PC-3 (cell line): ENCODE measurements at regions of chr10 and their contacts with region 1.

Region 1: GRCh38 chr10:38010119-38010903 is at the start of gene ZNF33A:
- DNase-seq: peak; percentile 98
- ATAC-seq: peak; percentile 93
- H3K4me3 ChIP-seq: peak within 1 kb of the TSS; percentile 71
- H3K27ac ChIP-seq: peak within 1 kb of the TSS; percentile 89
- H3K4me1 ChIP-seq: peaks cover 18% of the 10 kb centered on the region
- H3K27me3 ChIP-seq: no peaks in the 10 kb centered on the region
- CTCF ChIP-seq: no peak; the same call in 1 of the 2 replicates
- total RNA-seq, gene ZNF33A: 18.0 and 21.1 TPM in 2 replicates

Region 2: GRCh38 chr10:37992083-37992482 is 18.2 kb before region 1 on chr10:
- CTCF ChIA-PET with region 1: no interaction called
- POLR2A ChIA-PET with region 1: no interaction called
- intact Hi-C with region 1: loop called (anchors 1 kb)
- DNase-seq: no peak
- ATAC-seq: no peak; the same call in 1 of the 2 replicates
- H3K4me3 ChIP-seq: no peak overlapping the region
- H3K27ac ChIP-seq: no peak overlapping the region
- H3K4me1 ChIP-seq: no peaks in the 10 kb centered on the region
- H3K27me3 ChIP-seq: no peaks in the 10 kb centered on the region
- CTCF ChIP-seq: peak; percentile 35; the same call in 1 of the 2 replicates

Region 3: GRCh38 chr10:38094158-38094920 is 84.0 kb after region 1 on chr10 and contains the start of gene ZNF37A:
- CTCF ChIA-PET with region 1: no interaction called
- POLR2A ChIA-PET with region 1: no interaction called
- intact Hi-C with region 1: loop called (anchors 1 kb)
- DNase-seq: peak; percentile 98
- ATAC-seq: peak; percentile 98
- H3K4me3 ChIP-seq: peak within 1 kb of the TSS; percentile 91
- H3K27ac ChIP-seq: no peak within 1 kb of the TSS; the same call in 1 of the 2 replicates
- H3K4me1 ChIP-seq: peaks cover 13% of the 10 kb centered on the region
- H3K27me3 ChIP-seq: no peaks in the 10 kb centered on the region
- CTCF ChIP-seq: no peak
- total RNA-seq, gene ZNF37A: 19.7 and 25.7 TPM in 2 replicates